ENCODE measurements at regions of chr12 and their contacts with region 1.

Region 1: GRCh38 chr12:6341417-6342139 is at the start of gene TNFRSF1A:
- DNase-seq: peak; percentile 61
- ATAC-seq: peak; percentile 52
- H3K4me3 ChIP-seq: peak within 1 kb of the TSS; percentile 90
- H3K27ac ChIP-seq: peak within 1 kb of the TSS; percentile 83
- H3K4me1 ChIP-seq: peaks cover 61% of the 10 kb centered on the region
- H3K27me3 ChIP-seq: no peaks in the 10 kb centered on the region
- CTCF ChIP-seq: no peak
- total RNA-seq, gene TNFRSF1A: 95.1 and 97.4 TPM in 2 replicates

Region 2: DNA sequence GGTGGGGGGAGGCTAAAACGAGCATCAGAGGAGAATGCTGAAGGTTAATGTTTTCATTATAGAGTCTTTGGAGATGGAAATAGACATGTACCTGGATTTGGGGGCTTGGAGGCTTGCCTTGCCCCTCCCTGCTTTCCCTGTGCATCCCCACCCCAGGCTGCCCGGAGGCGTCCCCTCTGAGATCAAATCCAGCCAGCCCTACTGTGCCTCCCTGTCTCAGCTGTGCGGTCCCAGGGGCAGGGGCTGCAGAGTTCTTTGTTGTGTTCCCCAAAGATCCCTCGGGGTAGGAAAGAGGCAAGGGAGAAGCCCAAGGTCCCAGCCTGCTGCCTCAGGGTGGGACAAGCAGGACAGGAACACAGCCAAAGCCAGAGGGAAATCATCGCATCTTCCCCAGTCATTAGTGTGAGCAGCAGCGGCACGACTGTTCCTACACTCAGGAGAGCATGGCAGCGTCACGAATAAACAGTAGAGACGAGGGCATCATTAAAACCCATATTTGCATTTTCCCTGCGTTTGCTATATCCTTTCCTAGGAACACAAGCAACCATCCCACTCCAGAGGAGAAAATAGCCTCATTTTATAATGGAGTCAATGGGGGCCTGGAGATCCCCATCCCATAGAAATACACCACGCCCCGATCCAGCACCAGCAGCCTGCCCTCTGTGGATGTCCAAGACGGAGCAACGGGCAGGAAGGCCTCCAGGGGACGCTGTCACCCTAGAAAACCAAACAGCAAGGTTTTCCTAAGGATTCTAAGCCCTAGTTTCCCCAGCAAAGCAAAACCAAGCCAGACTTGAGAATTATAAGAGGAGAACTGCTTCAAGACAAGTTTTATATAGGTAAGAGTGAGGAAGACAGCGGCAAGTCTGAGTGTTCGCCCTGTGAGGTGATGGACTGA is 428.9 kb before region 1 on chr12:
- CTCF ChIA-PET with region 1: no interaction called
- POLR2A ChIA-PET with region 1: no interaction called
- intact Hi-C with region 1: no loop called
- DNase-seq: peak; percentile 7
- ATAC-seq: no peak
- H3K4me3 ChIP-seq: no peak overlapping the region
- H3K27ac ChIP-seq: no peak overlapping the region
- H3K4me1 ChIP-seq: no peaks in the 10 kb centered on the region
- H3K27me3 ChIP-seq: peaks cover 69% of the 10 kb centered on the region
- CTCF ChIP-seq: peak; percentile 48

Region 3: GRCh38 chr12:6039894-6040568 is 301.5 kb before region 1 on chr12:
- CTCF ChIA-PET with region 1: no interaction called
- POLR2A ChIA-PET with region 1: no interaction called
- intact Hi-C with region 1: no loop called
- DNase-seq: peak; percentile 74
- ATAC-seq: peak; percentile 72
- H3K4me3 ChIP-seq: no peak overlapping the region
- H3K27ac ChIP-seq: no peak overlapping the region
- H3K4me1 ChIP-seq: peaks cover 9% of the 10 kb centered on the region
- H3K27me3 ChIP-seq: no peaks in the 10 kb centered on the region
- CTCF ChIP-seq: peak; percentile 85

Region 4: GRCh38 chr12:6383572-6384498 is 42.3 kb after region 1 on chr12 and contains the start of gene LTBR:
- CTCF ChIA-PET with region 1: interaction called, 8 read pairs
- POLR2A ChIA-PET with region 1: interaction called, 6 read pairs
- intact Hi-C with region 1: loop called (anchors 2 kb)
- DNase-seq: peak; percentile 87
- ATAC-seq: peak; percentile 95
- H3K4me3 ChIP-seq: peak within 1 kb of the TSS; percentile 90
- H3K27ac ChIP-seq: peak within 1 kb of the TSS; percentile 82
- H3K4me1 ChIP-seq: peaks cover 27% of the 10 kb centered on the region
- H3K27me3 ChIP-seq: no peaks in the 10 kb centered on the region
- CTCF ChIP-seq: no peak
- total RNA-seq, gene LTBR: 160 and 163 TPM in 2 replicates